ENCODE measurements at regions of chr2 and their contacts with region 1.

Region 1: DNA sequence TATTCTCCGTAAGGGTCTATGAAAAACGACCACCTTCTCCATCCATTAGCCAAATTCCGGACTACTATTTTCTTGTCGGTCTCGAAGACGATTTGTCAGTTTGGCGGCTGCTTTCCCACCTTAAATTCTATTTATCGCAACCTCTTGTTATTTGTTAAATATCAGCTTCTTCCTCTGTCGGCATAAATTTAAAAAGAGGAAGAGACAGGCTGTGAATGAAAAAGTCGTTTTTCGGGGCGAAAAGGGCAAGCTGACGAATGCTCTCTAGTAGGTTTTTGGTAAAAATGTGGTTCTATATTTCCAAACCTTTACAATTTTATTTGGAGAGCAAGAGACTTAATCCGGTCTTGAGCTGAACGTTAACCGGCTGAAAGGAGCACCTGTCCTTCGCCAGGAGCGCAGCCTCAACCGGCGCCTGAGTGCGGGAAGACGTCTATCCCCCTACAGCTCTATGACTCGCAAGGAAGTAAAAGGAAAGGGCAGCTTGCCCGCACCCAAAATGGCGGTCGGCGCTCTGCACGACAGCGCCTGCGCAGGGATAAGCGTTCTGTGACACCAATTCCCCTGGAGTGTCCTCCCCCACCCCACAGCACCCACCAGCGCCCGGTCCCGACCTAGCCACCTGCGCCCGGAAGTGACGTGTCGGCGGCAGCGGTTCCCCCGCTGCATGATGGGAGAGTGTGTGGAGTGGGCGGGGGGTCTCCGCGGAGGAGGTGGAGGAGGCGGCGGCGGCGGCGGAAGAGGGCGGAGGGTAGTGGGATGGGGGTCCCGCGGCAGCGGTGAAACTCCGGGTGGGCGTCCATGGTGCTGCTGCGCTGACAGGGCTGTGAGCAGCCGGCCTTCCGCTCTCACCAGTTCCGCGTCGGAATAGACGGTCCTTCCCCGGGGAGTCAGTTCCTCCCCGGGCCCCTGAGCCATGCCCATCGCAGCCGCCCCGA is at the start of gene AFTPH:
- DNase-seq: peak; percentile 99
- H3K4me3 ChIP-seq: peak within 1 kb of the TSS; percentile 84
- H3K27ac ChIP-seq: peak within 1 kb of the TSS; percentile 82
- H3K4me1 ChIP-seq: peaks cover 29% of the 10 kb centered on the region
- CTCF ChIP-seq: no peak
- total RNA-seq, gene AFTPH: 39.0 and 40.6 TPM in 2 replicates

Region 2: GRCh38 chr2:64439194-64439593 is 84.7 kb before region 1 on chr2:
- CTCF ChIA-PET with region 1: no interaction called
- POLR2A ChIA-PET with region 1: no interaction called
- intact Hi-C with region 1: no loop called
- DNase-seq: no peak
- H3K4me3 ChIP-seq: no peak overlapping the region
- H3K27ac ChIP-seq: no peak overlapping the region
- H3K4me1 ChIP-seq: no peaks in the 10 kb centered on the region
- CTCF ChIP-seq: no peak

Region 3: GRCh38 chr2:64562148-64562784 is 38.3 kb after region 1 on chr2:
- CTCF ChIA-PET with region 1: no interaction called
- POLR2A ChIA-PET with region 1: interaction called, 18 read pairs
- intact Hi-C with region 1: loop called (anchors 1 kb)
- DNase-seq: peak; percentile 59
- H3K4me3 ChIP-seq: no peak overlapping the region
- H3K27ac ChIP-seq: peak overlapping the region; percentile 29
- H3K4me1 ChIP-seq: peaks cover 16% of the 10 kb centered on the region
- CTCF ChIP-seq: peak; percentile 88

Region 4: DNA sequence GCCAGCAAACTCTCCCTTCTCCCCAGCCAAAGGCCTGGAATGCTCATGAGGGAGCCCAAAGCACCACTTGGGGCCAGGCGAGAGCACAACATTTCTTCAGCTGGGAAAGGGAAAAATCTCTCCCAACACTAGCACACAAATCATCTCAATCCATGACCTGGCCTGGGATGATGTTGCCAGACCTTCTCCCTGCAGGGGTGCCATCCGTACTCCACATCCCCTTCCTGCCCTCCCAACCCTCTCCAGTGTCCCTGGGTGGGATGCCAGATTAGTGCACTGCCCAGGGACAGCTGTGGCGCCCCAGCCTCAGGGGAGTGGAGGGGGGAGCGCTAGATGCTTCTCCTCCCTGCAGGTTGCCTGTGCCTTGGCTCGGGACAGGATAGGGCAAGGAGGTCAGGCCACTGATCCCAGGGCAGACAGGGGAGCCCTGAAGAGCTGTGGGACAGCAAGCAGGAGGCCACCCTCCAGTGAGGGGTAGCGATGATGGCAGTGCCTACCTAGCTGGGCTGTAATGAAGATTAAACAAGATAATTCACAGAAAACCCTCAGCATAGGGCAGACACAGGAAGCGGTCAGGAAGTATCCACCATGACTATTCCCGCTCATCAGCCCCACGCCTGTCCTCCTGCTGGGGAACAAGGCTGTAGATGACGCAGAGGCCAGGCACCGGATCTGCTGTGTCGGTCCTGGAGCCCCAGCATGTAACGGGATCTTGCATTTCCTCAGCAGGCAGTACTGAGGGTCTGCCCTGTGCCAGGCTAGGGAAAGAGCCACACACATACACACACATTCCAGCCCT is 98.7 kb after region 1 on chr2:
- CTCF ChIA-PET with region 1: no interaction called
- POLR2A ChIA-PET with region 1: interaction called, 5 read pairs
- intact Hi-C with region 1: loop called (anchors 1 kb)
- DNase-seq: no peak
- H3K4me3 ChIP-seq: no peak overlapping the region
- H3K27ac ChIP-seq: no peak overlapping the region
- H3K4me1 ChIP-seq: peaks cover 17% of the 10 kb centered on the region
- CTCF ChIP-seq: no peak; the same call in 1 of the 2 replicates

Region 5: GRCh38 chr2:64865073-64865830 is 341.3 kb after region 1 on chr2:
- CTCF ChIA-PET with region 1: no interaction called
- POLR2A ChIA-PET with region 1: interaction called, 3 read pairs
- intact Hi-C with region 1: loop called (anchors 2 kb)
- DNase-seq: peak; percentile 76
- H3K4me3 ChIP-seq: peak overlapping the region; percentile 69
- H3K27ac ChIP-seq: peak overlapping the region; percentile 20
- H3K4me1 ChIP-seq: peaks cover 54% of the 10 kb centered on the region
- CTCF ChIP-seq: peak; percentile 75

Region 6: DNA sequence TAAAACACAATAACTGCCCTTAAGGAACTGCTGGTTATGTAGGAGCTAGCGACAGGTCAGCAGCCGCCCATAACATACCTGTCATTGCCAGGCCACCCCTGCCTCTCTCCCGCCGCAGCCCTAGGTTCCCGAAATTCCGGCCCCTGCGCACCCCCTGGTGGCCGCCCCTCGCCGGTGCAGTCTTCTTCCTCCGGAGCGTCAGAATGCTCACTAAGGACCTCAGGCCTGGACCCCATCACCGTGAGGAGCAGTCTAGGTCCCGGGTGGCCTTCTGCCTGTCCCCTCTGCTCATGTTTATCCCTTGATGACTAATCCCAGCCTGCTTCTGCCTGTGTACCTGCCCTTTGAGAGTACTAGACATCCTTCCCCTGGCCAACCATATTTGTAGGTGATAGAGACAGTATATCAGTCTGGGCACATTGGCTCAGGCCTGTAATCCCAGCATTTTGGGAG is 349.6 kb after region 1 on chr2:
- CTCF ChIA-PET with region 1: no interaction called
- POLR2A ChIA-PET with region 1: interaction called, 4 read pairs
- intact Hi-C with region 1: loop called (anchors 1 kb)
- DNase-seq: peak; percentile 75
- H3K4me3 ChIP-seq: peak overlapping the region; percentile 28
- H3K27ac ChIP-seq: no peak overlapping the region
- H3K4me1 ChIP-seq: peaks cover 9% of the 10 kb centered on the region
- CTCF ChIP-seq: peak; percentile 98